HEK293T (cell line): ENCODE measurements at regions of chr12 and their contacts with region 1.

Region 1: DNA sequence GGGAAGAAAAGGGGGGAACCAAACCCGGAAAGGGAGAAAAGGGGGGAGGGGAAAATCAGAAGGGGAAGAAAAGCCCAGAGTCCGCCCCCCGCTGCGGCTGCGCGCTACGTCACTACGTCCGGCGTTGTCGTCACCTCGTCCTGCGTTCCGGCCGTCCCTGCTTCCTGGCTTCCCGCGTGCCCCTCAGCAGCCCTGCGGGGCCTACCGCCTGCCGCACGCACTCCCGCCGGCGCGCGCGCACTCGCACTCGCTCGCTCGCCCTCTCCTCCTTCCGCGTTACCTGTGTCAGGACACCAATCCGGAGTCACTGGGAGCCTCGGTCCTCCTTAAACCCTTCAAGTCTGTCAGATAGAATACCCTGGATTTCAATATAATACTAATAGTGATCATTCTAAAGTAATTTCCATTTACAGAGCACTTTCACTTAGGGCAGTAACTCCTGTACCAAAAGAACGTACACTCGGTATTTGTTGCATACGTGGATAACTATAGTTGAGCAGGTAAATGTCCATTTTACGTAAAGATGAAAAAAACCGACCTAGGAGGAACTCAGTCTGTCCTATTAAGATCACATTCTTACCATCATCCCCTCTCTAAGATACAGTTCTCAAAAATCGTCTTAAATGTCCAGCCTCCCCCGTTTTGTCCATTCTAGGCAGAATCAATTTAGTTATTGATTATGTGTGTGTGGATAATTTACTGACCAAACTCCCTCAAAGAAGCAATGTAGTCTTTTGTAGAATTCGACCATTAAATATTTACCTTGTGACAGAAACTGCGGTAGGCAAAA is at the start of gene R3HDM2:
- DNase-seq: peak; percentile 97

Region 2: DNA sequence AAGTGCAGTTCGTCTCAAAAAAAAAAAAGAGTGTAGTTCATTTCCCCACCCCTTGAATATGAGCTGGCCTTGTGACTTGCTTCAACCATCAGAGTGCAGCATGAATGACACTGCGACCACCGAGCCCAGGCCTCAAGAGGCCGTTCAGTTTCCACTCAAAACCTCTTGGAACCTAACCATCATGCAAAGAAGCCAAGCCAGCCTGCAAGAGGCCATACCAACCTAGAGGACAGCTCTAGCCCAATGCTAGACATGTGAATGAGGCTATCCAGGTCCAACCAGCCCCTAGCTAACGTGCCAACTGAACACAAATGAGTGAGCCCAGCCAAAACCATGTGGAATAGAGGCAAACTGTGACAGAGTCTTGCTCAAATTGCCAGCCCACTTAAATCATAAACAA is 30.0 kb before region 1 on chr12:
- CTCF ChIA-PET with region 1: interaction called, 10 read pairs
- POLR2A ChIA-PET with region 1: interaction called, 3 read pairs
- DNase-seq: no peak

Region 3: DNA sequence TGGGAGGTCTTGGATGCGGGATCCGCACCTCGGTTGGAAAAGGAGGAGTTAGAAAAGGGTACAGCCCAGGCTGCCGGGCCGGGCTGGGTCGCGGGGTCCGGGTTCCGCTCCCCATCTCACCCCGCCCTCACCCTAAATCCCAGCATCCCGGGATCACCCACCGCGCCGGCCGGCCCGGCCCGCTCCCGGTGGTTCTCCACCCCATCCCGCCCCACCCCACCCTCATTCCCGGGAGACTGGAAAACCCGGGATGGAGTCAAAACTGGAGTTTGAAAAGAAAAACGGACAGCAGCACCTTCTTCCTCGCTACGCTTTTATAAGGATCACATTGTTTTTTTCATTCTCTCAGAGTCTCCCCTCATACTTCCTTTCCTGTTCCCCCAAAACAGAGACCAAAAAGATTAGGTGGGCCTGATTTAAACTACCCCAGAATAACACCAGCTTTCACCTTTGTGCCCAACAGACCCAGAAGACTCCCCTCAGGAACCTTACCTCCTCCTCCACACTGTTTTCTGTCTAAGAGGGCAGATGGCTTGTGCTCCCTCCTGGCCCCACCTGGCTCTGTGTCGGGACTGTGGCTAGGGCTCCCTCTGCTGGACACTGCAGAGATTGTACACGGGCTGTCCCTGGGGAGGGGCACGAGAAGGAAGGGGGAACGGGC is 31.3 kb after region 1 on chr12:
- CTCF ChIA-PET with region 1: no interaction called
- POLR2A ChIA-PET with region 1: interaction called, 11 read pairs
- DNase-seq: peak; percentile 92

Region 4: DNA sequence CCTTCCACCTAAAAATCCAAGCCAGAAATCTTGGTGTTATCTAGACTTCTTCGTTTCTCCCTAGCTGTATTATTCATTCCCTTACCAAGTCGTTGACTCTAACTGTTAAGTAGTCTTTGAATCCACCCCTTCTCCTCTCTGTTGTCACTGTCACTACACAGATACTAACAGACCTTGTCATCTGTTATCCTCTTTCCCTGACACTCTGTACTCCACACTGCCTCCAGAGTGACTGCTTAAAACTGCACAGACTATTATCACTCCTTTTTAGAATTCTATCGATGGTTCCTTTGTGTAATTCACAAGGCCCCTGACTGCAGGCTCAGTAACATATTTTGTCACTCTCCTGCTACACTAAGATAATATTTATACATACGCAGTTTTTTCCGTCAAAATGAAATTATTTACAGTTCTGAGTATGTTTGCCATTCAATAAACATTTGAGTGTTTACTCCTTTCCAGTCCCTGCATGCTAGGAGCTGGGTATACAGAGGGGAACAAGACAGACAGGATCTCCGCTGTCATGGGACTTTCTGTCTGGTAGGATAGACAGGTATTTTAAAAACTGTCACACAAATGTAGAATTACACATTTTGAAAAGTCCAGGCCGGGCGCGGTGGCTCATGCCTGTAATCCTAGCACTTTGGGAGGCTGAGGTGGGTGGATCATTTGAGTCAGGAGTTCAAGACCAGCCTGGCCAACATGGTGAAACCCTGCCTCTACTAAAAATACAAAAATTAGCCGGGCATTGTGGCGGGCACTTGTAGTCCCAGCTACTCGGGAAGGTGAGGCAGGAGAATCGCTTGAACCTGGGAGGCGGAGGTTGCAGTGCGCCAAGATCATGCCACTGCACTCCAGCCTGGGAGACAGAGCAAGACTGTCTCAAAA is 60.5 kb after region 1 on chr12:
- CTCF ChIA-PET with region 1: no interaction called
- POLR2A ChIA-PET with region 1: no interaction called
- DNase-seq: no peak

Region 5: GRCh38 chr12:57576613-57577160 is 145.6 kb after region 1 on chr12:
- CTCF ChIA-PET with region 1: no interaction called
- POLR2A ChIA-PET with region 1: no interaction called
- DNase-seq: no peak